ENCODE measurements at regions of chr2 and their contacts with region 1.

Region 1: DNA sequence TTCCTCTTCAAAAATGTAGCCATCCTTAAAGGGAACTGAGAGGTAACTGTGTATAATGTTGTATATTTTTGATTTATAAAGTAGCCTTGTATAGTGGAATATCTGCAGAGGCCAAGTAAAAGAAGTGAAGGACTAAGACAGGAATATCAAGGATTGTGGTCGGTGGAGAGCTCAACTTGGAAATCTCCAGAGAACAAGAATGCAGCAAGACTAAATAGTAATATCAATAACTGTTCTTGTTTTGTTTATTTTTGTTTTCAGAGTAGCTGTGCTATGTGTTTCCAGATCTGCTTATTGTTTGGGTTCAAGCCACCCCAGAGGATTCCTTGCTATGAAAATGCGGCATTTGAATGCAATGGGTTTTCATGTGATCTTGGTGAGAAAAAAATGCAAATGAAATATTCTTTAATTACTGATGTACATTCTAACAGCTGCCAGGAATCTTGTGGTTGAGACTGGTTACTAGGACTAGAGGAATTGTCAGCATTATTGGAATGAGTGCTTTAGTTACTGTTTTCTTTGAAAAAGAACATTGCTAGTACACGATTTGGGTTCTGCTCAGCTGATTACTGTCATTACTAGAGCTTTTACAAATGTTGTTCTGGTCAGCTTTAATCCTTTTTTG is 25.0 kb downstream of the FASTKD2 start:
- DNase-seq: no peak
- H3K4me3 ChIP-seq: no peak overlapping the region
- H3K27ac ChIP-seq: no peak overlapping the region
- H3K4me1 ChIP-seq: peaks cover 0 to 3% of the 10 kb centered on the region in 2 experiments; a peak in 1 of 4 replicates
- H3K27me3 ChIP-seq: no peaks in the 10 kb centered on the region
- CTCF ChIP-seq: no peak
- EP300 ChIP-seq: no peak
- RAD21 ChIP-seq: no peak

Region 2: GRCh38 chr2:206693399-206694137 is 96.9 kb before region 1 on chr2:
- CTCF ChIA-PET with region 1: interaction called, 12 read pairs
- POLR2A ChIA-PET with region 1: no interaction called
- DNase-seq: peak; percentile 59
- H3K4me3 ChIP-seq: no peak overlapping the region; a peak in 1 of 4 replicates
- H3K27ac ChIP-seq: no peak overlapping the region
- H3K4me1 ChIP-seq: no peaks in the 10 kb centered on the region
- H3K27me3 ChIP-seq: no peaks in the 10 kb centered on the region; the same call in 1 of the 2 replicates
- CTCF ChIP-seq: peak; percentile 77
- EP300 ChIP-seq: no peak
- RAD21 ChIP-seq: peak; percentile 94

Region 3: DNA sequence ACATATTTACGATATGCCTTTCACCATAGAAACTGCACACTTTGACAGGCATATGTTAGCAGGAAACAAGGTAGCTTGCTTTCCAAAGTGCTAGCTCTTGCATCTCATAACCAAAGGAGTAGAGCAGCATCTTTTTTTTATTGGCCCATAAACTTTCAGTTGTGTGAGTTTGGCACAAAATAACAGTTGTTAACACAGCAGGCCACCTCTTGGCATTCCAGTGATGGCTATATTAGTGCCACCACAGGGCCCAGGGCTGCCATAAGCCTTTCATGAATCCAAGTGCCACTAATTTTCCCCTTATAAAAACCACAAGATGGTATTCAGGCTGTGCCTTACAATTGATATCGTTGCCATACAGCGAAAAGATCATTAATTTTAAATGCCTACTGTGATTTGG is 415.6 kb after region 1 on chr2:
- CTCF ChIA-PET with region 1: no interaction called
- POLR2A ChIA-PET with region 1: no interaction called
- DNase-seq: no peak
- H3K4me3 ChIP-seq: no peak overlapping the region
- H3K27ac ChIP-seq: peak overlapping the region in 1 of 2 experiments; percentile 73; a peak in 2 of 4 replicates
- H3K4me1 ChIP-seq: peaks cover 0 to 8% of the 10 kb centered on the region in 2 experiments; a peak in 2 of 4 replicates
- H3K27me3 ChIP-seq: no peaks in the 10 kb centered on the region
- CTCF ChIP-seq: no peak
- EP300 ChIP-seq: no peak
- RAD21 ChIP-seq: no peak